Breast epithelium (tissue), 4 donors: ENCODE measurements at regions of chr2 and their contacts with region 1.

Region 1: GRCh38 chr2:67346718-67347407 is 50.3 kb upstream of the ETAA1 start:
- DNase-seq: no peak
- H3K4me3 ChIP-seq: no peak overlapping the region
- H3K27ac ChIP-seq: no peak overlapping the region
- H3K4me1 ChIP-seq: no peaks in the 10 kb centered on the region
- H3K27me3 ChIP-seq: no peaks in the 10 kb centered on the region
- CTCF ChIP-seq: no peak
- POLR2A ChIP-seq: no peak

Region 2: DNA sequence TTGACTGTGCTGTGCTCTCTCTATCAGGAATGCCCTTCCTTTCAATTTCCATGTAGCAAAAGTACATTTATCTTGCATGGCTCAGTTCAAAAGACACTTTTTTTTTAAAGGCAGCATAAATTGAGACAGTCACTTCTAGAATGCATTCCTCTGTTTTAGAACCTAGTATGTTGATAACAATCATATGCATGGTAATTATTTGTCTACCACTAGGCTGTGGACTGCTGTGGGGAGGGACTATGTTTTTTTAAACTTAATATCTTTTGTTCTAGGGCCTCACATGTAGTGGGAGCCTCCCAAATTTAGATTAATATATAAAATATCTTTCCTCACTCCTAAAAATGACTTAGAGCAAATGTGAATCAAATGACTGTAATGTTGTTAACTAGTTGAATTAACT is 642.1 kb before region 1 on chr2:
- intact Hi-C with region 1: loop called (anchors 5 kb)
- DNase-seq: no peak
- H3K4me3 ChIP-seq: no peak overlapping the region
- H3K27ac ChIP-seq: no peak overlapping the region
- H3K4me1 ChIP-seq: no peaks in the 10 kb centered on the region
- H3K27me3 ChIP-seq: no peaks in the 10 kb centered on the region
- CTCF ChIP-seq: no peak
- POLR2A ChIP-seq: no peak

Region 3: GRCh38 chr2:67384123-67384822 is 37.4 kb after region 1 on chr2:
- intact Hi-C with region 1: no loop called
- DNase-seq: no peak
- H3K4me3 ChIP-seq: no peak overlapping the region
- H3K27ac ChIP-seq: no peak overlapping the region
- H3K4me1 ChIP-seq: no peaks in the 10 kb centered on the region
- H3K27me3 ChIP-seq: no peaks in the 10 kb centered on the region
- CTCF ChIP-seq: no peak
- POLR2A ChIP-seq: no peak